CD4-positive, alpha-beta memory T cell (primary cell): ENCODE measurements at regions of chr3 and their contacts with region 1.

Region 1: GRCh38 chr3:9452417-9452816 is 55.0 kb downstream of the SETD5 start:
- DNase-seq: peak in 4 of 5 donors; percentile 12 to 30 (median 20)
- H3K4me3 ChIP-seq: no peak overlapping the region
- H3K4me3 Mint-ChIP-seq: peak overlapping the region in 6 of 8 donors; percentile 3 to 77 (median 30)
- H3K27ac ChIP-seq: peak overlapping the region; percentile 43
- H3K27ac Mint-ChIP-seq: peak overlapping the region; percentile 83 to 94 (median 90)
- H3K4me1 ChIP-seq: peaks cover 19% of the 10 kb centered on the region
- H3K4me1 Mint-ChIP-seq: peaks cover 14 to 41% (median 22%) of the 10 kb centered on the region in 4 donors
- H3K27me3 ChIP-seq: no peaks in the 10 kb centered on the region
- H3K27me3 Mint-ChIP-seq: no peaks in the 10 kb centered on the region

Region 2: DNA sequence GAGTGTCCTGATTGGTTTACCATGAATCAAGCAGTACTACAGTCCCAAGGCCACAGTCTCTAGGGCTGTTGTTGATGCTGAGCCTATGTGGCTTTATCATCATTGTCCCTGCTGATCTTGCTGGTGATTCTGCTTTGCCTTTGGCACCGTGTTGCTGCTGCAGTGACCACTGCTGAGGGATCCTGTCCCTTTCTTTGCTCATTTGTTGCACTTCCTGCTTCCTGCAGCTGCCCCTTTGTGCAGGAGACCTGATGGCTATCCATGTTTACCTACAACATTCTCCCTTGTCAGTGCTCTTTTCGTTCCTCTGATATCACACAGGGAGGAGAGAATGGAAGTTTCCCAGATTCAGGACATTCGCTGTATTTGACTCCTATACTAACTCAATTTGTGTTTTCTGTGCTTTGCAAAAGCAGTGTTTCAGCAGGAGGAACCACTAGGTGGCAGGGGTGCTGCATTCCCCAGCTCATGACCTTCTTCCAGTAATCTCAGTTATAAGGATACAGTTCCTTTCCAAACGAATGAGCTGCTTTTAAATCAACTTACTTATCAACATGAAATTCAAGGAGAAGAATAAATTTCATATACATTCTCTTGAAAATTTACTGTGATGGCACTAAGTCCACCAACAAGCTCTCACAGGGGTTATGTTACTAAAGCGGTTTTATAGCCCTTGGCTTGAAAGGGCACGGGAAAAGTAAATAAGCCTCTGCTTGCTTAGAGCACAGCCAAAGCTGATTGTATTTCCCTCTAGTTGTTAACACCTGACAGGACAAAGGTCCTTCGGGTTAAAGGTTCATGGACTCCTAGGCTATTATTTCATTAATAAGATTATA is 99.3 kb before region 1 on chr3:
- CTCF ChIA-PET with region 1: interaction called, 10 read pairs
- POLR2A ChIA-PET with region 1: no interaction called
- intact Hi-C with region 1: loop called (anchors 2 kb)
- DNase-seq: peak; percentile 45 to 61 (median 55)
- H3K4me3 ChIP-seq: no peak overlapping the region
- H3K4me3 Mint-ChIP-seq: no peak overlapping the region
- H3K27ac ChIP-seq: no peak overlapping the region
- H3K27ac Mint-ChIP-seq: peak overlapping the region in 1 of 7 donors; percentile 26
- H3K4me1 ChIP-seq: no peaks in the 10 kb centered on the region
- H3K4me1 Mint-ChIP-seq: peaks cover 10 to 16% (median 13%) of the 10 kb centered on the region in 4 donors
- H3K27me3 ChIP-seq: no peaks in the 10 kb centered on the region
- H3K27me3 Mint-ChIP-seq: no peaks in the 10 kb centered on the region

Region 3: GRCh38 chr3:9422712-9423424 is 29.5 kb before region 1 on chr3:
- CTCF ChIA-PET with region 1: no interaction called
- POLR2A ChIA-PET with region 1: no interaction called
- intact Hi-C with region 1: no loop called
- DNase-seq: peak; percentile 31 to 46 (median 35)
- H3K4me3 ChIP-seq: no peak overlapping the region
- H3K4me3 Mint-ChIP-seq: peak overlapping the region in 2 of 8 donors; percentile 0 to 59
- H3K27ac ChIP-seq: peak overlapping the region; percentile 1
- H3K27ac Mint-ChIP-seq: peak overlapping the region; percentile 33 to 93 (median 74)
- H3K4me1 ChIP-seq: peaks cover 22% of the 10 kb centered on the region
- H3K4me1 Mint-ChIP-seq: peaks cover 26 to 37% (median 34%) of the 10 kb centered on the region in 4 donors
- H3K27me3 ChIP-seq: no peaks in the 10 kb centered on the region
- H3K27me3 Mint-ChIP-seq: no peaks in the 10 kb centered on the region